ENCODE measurements at regions of chr10 and their contacts with region 1.

Region 1: DNA sequence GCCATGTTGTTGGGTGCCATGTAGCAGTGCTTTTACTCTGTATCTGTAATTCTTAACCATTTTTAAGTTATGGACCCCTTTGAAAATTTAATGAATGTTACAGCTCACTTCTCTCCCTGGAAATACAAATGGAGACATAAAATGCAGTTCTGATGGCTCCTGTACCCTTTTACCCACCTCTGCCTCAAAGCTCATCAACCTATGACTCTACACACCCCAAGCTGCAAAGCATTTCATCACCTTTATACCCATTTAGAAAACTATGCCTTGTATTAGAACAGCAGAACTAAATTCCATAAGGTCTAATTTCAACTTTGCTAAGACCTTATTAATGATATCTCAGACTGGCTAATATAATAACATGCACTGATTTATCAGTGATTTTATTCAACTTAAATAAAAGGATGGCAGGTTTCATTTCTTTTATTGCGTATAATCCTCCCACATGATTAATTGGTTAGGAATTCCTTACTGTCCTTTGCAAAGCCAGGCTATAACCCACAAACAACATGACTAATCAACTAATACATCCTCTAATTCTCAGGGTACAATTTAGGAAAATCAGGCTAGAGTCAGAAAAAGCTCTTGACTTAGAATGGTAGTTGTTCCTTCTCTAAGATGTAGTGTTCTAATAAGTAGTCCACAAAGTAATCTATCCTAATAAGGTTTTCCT is 68.1 kb downstream of the CPEB3 start:
- DNase-seq: no peak
- ATAC-seq: no peak
- H3K4me3 ChIP-seq: no peak overlapping the region
- H3K27ac ChIP-seq: no peak overlapping the region
- H3K4me1 ChIP-seq: no peaks in the 10 kb centered on the region
- H3K27me3 ChIP-seq: no peaks in the 10 kb centered on the region

Region 2: DNA sequence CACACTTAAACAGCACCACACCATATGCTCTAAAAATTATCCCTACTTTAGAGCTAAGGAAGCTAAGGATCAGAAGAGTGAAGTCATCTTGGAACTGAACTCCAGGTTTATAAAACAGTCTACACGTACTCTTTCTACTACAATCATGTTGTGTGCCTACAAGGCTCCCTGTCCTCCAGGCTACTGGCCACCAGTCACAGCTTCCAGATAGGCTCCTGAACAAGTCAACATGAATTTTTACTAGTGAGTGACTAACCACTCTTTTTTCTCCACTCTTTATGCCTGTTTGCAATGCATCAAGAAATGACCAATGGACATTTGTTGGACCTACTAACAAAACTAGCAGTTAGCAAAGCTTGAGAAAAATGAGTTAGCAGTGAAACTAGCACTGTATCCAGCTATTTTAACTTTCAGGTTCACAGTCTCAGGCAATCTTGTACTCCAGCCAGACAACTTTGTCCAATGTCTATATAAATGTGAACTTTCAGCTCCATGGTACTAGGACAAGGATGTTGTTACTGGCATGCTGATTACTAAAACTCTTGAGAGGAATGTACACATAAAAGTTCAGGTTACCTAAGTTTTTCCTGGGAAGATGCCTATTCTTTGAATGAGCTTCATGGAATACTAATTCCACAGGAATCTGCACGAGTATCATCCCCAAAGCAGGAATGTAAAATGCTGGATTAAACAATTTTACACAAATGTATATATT is 119.2 kb before region 1 on chr10:
- intact Hi-C with region 1: loop called in 1 of 2 experiments (anchors 10 kb)
- DNase-seq: no peak
- ATAC-seq: peak; percentile 36
- H3K4me3 ChIP-seq: no peak overlapping the region
- H3K27ac ChIP-seq: peak overlapping the region; percentile 34 to 67
- H3K4me1 ChIP-seq: peaks cover 7 to 10% of the 10 kb centered on the region in 2 donors
- H3K27me3 ChIP-seq: no peaks in the 10 kb centered on the region

Region 3: DNA sequence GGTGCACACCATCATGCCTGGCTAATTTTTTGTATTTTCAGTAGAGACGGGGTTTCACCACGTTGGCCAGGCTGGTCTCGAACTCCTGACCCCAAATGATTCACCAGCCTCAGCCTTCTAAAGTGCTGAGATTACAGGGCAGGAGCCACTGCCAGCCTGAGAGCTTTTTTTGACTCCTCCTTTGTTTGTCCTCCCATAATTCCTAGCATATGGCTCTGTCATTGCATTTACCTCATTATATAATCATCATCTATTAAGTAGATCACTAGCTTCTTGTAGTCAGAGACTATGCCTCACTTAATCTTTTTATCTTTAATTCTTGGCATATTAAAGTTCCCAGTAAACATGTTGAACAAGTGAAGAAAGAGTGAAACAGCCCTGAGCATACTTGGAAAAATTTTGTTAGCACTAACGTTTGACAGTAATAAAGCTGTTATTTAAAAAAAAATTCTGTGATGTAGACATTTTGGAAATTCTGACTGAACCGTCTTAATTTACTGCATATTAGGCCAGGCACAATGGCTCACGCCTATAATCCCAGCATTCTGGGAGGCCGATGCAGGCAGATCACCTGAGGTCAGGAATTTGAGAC is 13.9 kb before region 1 on chr10:
- intact Hi-C with region 1: no loop called
- DNase-seq: no peak
- ATAC-seq: no peak
- H3K4me3 ChIP-seq: no peak overlapping the region
- H3K27ac ChIP-seq: peak overlapping the region in 1 of 2 donors; percentile 1
- H3K4me1 ChIP-seq: no peaks in the 10 kb centered on the region
- H3K27me3 ChIP-seq: no peaks in the 10 kb centered on the region

Region 4: GRCh38 chr10:92284112-92284704 is 61.5 kb after region 1 on chr10:
- intact Hi-C with region 1: loop called in 1 of 2 experiments (anchors 10 kb)
- DNase-seq: no peak
- ATAC-seq: peak; percentile 48
- H3K4me3 ChIP-seq: no peak overlapping the region
- H3K27ac ChIP-seq: peak overlapping the region in 1 of 2 donors; percentile 42
- H3K4me1 ChIP-seq: peaks cover 0 to 1% of the 10 kb centered on the region in 2 donors
- H3K27me3 ChIP-seq: no peaks in the 10 kb centered on the region